Naive thymus-derived CD8-positive, alpha-beta T cell (primary cell): ENCODE measurements at regions of chr12 and their contacts with region 1.

Region 1: GRCh38 chr12:4604684-4605193 is 42.7 kb downstream of the DYRK4 start:
- DNase-seq: peak; percentile 59 to 86 (median 76)
- ATAC-seq: peak; percentile 96
- H3K4me3 Mint-ChIP-seq: peak overlapping the region; percentile 95 to 99 (median 98)
- H3K27ac Mint-ChIP-seq: peak overlapping the region; percentile 90 to 97 (median 96)
- H3K4me1 Mint-ChIP-seq: peaks cover 27 to 39% (median 34%) of the 10 kb centered on the region in 4 donors
- H3K27me3 Mint-ChIP-seq: peaks cover 0 to 20% (median 10%) of the 10 kb centered on the region in 5 donors

Region 2: GRCh38 chr12:4567073-4567881 is 37.5 kb before region 1 on chr12:
- POLR2A ChIA-PET with region 1: no interaction called
- DNase-seq: no peak
- ATAC-seq: no peak
- H3K4me3 Mint-ChIP-seq: peak overlapping the region in 1 of 10 donors; percentile 55
- H3K27ac Mint-ChIP-seq: peak overlapping the region in 1 of 10 donors; percentile 80
- H3K4me1 Mint-ChIP-seq: peaks cover 2 to 52% (median 8%) of the 10 kb centered on the region in 4 donors
- H3K27me3 Mint-ChIP-seq: peaks cover 8 to 51% (median 23%) of the 10 kb centered on the region in 5 donors

Region 3: GRCh38 chr12:4648501-4649357 is 44.0 kb after region 1 on chr12 and contains the starts of genes AKAP3 and NDUFA9:
- POLR2A ChIA-PET with region 1: interaction called, 10 read pairs
- DNase-seq: peak; percentile 60 to 89 (median 76)
- ATAC-seq: peak; percentile 95 to 98
- H3K4me3 Mint-ChIP-seq: peak within 1 kb of the TSS; percentile 91 to 100 (median 97)
- H3K27ac Mint-ChIP-seq: peak within 1 kb of the TSS; percentile 92 to 99 (median 97)
- H3K4me1 Mint-ChIP-seq: peaks cover 23 to 60% (median 54%) of the 10 kb centered on the region in 4 donors
- H3K27me3 Mint-ChIP-seq: no peaks in the 10 kb centered on the region
- polyA plus RNA-seq, gene AKAP3: 0.90 to 4.7 (median 1.9) TPM
- polyA plus RNA-seq, gene NDUFA9: 117 to 176 (median 141) TPM